Activated naive CD4-positive, alpha-beta T cell treated with anti-CD3 and anti-CD28 coated beads for 36 hours (primary cell): ENCODE measurements at regions of chr2 and their contacts with region 1.

Region 1: GRCh38 chr2:217650716-217651360 is 352.0 kb downstream of the TNS1 start:
- DNase-seq: peak; percentile 42
- H3K4me3 Mint-ChIP-seq: no peak overlapping the region
- H3K27ac Mint-ChIP-seq: no peak overlapping the region
- H3K4me1 Mint-ChIP-seq: no peaks in the 10 kb centered on the region
- H3K27me3 Mint-ChIP-seq: no peaks in the 10 kb centered on the region

Region 2: DNA sequence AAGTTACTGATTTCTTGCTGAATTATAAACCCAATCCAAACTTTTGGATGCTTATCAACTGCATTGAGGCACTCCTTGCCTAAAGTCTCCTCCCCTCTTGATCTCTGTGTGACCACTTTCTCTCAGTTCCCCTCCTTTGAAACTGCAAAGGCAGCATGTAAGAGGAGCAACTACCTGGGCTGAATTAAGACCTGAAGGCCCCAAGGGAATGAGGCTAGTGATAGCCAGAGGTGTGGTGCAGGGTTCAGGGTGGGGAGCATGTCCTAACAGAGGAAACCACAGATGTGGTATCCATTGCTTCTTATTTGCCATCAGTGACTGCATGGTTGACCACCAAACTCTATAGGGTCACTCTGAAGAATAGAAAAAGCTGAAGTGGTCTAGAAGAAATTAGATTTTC is 205.9 kb before region 1 on chr2:
- CTCF ChIA-PET with region 1: no interaction called
- intact Hi-C with region 1: no loop called
- DNase-seq: no peak
- H3K4me3 Mint-ChIP-seq: no peak overlapping the region
- H3K27ac Mint-ChIP-seq: no peak overlapping the region
- H3K4me1 Mint-ChIP-seq: peaks cover 3% of the 10 kb centered on the region
- H3K27me3 Mint-ChIP-seq: peaks cover 2% of the 10 kb centered on the region

Region 3: GRCh38 chr2:217672491-217672900 is 21.7 kb after region 1 on chr2:
- CTCF ChIA-PET with region 1: interaction called, 19 read pairs
- intact Hi-C with region 1: no loop called
- DNase-seq: no peak
- H3K4me3 Mint-ChIP-seq: no peak overlapping the region
- H3K27ac Mint-ChIP-seq: no peak overlapping the region
- H3K4me1 Mint-ChIP-seq: no peaks in the 10 kb centered on the region
- H3K27me3 Mint-ChIP-seq: no peaks in the 10 kb centered on the region

Region 4: GRCh38 chr2:217822296-217823252 is 171.7 kb after region 1 on chr2:
- CTCF ChIA-PET with region 1: no interaction called
- intact Hi-C with region 1: no loop called
- DNase-seq: no peak
- H3K4me3 Mint-ChIP-seq: no peak overlapping the region
- H3K27ac Mint-ChIP-seq: no peak overlapping the region
- H3K4me1 Mint-ChIP-seq: no peaks in the 10 kb centered on the region
- H3K27me3 Mint-ChIP-seq: no peaks in the 10 kb centered on the region

Region 5: GRCh38 chr2:217864963-217865772 is 214.3 kb after region 1 on chr2:
- CTCF ChIA-PET with region 1: no interaction called
- intact Hi-C with region 1: no loop called
- DNase-seq: no peak
- H3K4me3 Mint-ChIP-seq: no peak overlapping the region
- H3K27ac Mint-ChIP-seq: no peak overlapping the region
- H3K4me1 Mint-ChIP-seq: no peaks in the 10 kb centered on the region
- H3K27me3 Mint-ChIP-seq: no peaks in the 10 kb centered on the region